CD8-positive, alpha-beta T cell (primary cell): ENCODE measurements at regions of chr17 and their contacts with region 1.

Region 1: GRCh38 chr17:58447039-58447975 is 30.0 kb upstream of the RNF43 start:
- DNase-seq: peak; percentile 20 to 79 (median 58)
- ATAC-seq: no peak
- H3K4me3 ChIP-seq: no peak overlapping the region
- H3K4me3 Mint-ChIP-seq: no peak overlapping the region
- H3K27ac ChIP-seq: no peak overlapping the region
- H3K27ac Mint-ChIP-seq: no peak overlapping the region
- H3K4me1 ChIP-seq: no peaks in the 10 kb centered on the region
- H3K4me1 Mint-ChIP-seq: peaks cover 3% of the 10 kb centered on the region
- H3K27me3 ChIP-seq: no peaks in the 10 kb centered on the region
- H3K27me3 Mint-ChIP-seq: no peaks in the 10 kb centered on the region
- CTCF ChIP-seq: peak; percentile 60

Region 2: DNA sequence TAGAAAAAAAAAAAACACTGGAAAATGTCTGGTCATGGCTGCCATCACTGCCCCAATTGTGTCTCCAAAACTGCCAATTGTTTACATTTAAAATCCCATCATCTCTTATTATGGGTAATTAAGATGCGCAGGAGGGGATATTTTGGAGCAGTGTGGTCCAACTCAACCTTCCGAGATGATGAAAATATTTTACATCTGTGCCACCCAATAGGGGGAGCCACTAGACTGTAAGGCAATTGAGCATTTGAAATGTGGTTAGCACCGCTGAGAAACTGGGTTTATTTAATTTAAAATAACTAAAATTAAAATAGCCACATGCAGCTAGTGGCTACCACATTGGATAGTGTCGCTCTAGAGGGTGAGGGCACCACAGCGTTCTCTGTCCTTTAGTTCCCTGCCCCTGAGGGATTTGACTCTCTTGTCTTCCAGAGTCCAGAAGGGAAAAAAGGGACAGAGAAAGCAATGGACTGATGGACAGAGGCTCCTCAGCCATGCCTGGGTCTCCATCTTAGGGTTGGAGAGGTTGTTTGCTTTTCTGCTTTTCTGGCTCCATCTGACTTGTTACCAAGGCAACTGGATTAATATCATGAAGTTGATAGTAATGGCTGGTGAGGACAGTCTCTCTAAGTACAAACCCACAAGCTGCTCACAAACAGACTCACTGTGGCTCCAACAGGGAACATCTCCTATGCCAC is 170.1 kb before region 1 on chr17:
- CTCF ChIA-PET with region 1: no interaction called
- POLR2A ChIA-PET with region 1: no interaction called
- intact Hi-C with region 1: loop called in 1 of 2 experiments (anchors 1 kb)
- DNase-seq: peak in 2 of 9 experiments; percentile 42 to 49
- ATAC-seq: no peak
- H3K4me3 ChIP-seq: no peak overlapping the region
- H3K4me3 Mint-ChIP-seq: no peak overlapping the region
- H3K27ac ChIP-seq: no peak overlapping the region
- H3K27ac Mint-ChIP-seq: no peak overlapping the region
- H3K4me1 ChIP-seq: peaks cover 4% of the 10 kb centered on the region
- H3K4me1 Mint-ChIP-seq: peaks cover 5% of the 10 kb centered on the region
- H3K27me3 ChIP-seq: peaks cover 0 to 2% of the 10 kb centered on the region in 2 experiments
- H3K27me3 Mint-ChIP-seq: peaks cover 21% of the 10 kb centered on the region
- CTCF ChIP-seq: peak; percentile 35